GM12878 (cell line): ENCODE measurements at regions of chr11 and their contacts with region 1.

Region 1: DNA sequence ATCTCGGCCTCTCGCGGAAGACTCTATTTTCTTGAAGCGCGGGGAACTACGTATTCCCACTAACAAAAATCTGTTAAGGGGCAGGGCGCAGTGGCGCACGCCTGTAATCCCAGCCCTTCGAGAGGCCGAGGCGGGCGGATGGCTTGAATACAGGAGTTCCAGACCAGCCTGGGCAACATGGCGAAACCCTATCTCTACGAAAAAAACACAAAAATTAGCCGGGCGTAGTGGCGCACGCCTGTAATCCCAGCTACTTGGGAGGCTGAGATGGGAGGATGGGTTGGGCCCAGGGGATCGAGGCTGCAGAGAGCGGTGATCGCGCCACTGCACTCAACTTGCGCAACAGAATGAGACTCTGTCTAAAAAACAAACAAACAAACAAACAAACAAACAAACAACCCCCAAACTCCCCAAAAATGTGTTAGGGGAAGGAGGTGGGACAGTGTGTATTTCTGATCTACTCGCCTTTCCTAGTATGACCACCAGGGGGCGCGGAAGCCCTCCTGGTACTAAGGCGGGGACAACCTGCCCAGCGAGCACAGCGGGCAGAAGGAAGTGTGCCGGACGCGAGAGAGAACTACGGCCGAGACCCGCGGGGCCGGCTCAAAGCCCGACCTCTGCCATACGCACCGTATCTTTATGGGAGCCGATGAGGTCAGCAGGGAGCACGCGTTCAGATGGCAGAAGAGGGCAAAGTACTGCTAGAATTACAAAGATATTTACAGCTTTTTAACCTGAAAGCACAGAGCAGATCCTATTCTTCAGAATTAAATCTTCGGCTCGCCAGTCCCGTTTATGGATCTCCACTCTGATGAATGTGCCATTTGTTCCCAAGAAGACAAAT is 1.3 kb upstream of the STX3 start:
- DNase-seq: peak; percentile 50
- ATAC-seq: peak; percentile 88
- H3K4me3 ChIP-seq: peak overlapping the region; percentile 97
- H3K27ac ChIP-seq: no peak overlapping the region
- H3K4me1 ChIP-seq: peaks cover 4% of the 10 kb centered on the region
- H3K27me3 ChIP-seq: peaks cover 0 to 3% of the 10 kb centered on the region in 2 experiments; a peak in 1 of 4 replicates
- CTCF ChIP-seq: peak; percentile 81 to 89 (median 85)
- EP300 ChIP-seq: no peak
- POLR2A ChIP-seq: no peak
- RAD21 ChIP-seq: peak; percentile 79

Region 2: GRCh38 chr11:59802639-59803176 is 48.8 kb after region 1 on chr11:
- CTCF ChIA-PET with region 1: interaction called, 88 read pairs
- POLR2A ChIA-PET with region 1: interaction called, 4 read pairs
- RAD21 ChIA-PET with region 1: interaction called, 31 read pairs
- SMC1A ChIA-PET with region 1: interaction called, 21 read pairs
- in situ Hi-C with region 1: loop called (anchors 5 kb)
- intact Hi-C with region 1: loop called (anchors 1 kb)
- DNase-seq: no peak
- ATAC-seq: peak; percentile 82
- H3K4me3 ChIP-seq: no peak overlapping the region
- H3K27ac ChIP-seq: no peak overlapping the region
- H3K4me1 ChIP-seq: no peaks in the 10 kb centered on the region
- H3K27me3 ChIP-seq: no peaks in the 10 kb centered on the region
- CTCF ChIP-seq: peak; percentile 47 to 73 (median 65); a peak in 5 of 6 replicates
- EP300 ChIP-seq: no peak
- POLR2A ChIP-seq: no peak
- RAD21 ChIP-seq: peak; percentile 86

Region 3: GRCh38 chr11:59810189-59810910 is 56.5 kb after region 1 on chr11 and contains the start of gene MRPL16:
- CTCF ChIA-PET with region 1: interaction called, 17 read pairs
- POLR2A ChIA-PET with region 1: no interaction called
- RAD21 ChIA-PET with region 1: interaction called, 5 read pairs
- SMC1A ChIA-PET with region 1: interaction called, 18 read pairs
- in situ Hi-C with region 1: no loop called
- intact Hi-C with region 1: loop called (anchors 2 kb)
- DNase-seq: peak; percentile 69
- ATAC-seq: peak; percentile 99
- H3K4me3 ChIP-seq: peak within 1 kb of the TSS; percentile 87
- H3K27ac ChIP-seq: peak within 1 kb of the TSS; percentile 67
- H3K4me1 ChIP-seq: no peaks in the 10 kb centered on the region; the same call in 1 of the 2 replicates
- H3K27me3 ChIP-seq: no peaks in the 10 kb centered on the region
- CTCF ChIP-seq: peak; percentile 8 to 44 (median 41); a peak in 5 of 6 replicates
- EP300 ChIP-seq: no peak
- POLR2A ChIP-seq: peak; percentile 95
- RAD21 ChIP-seq: no peak
- polyA plus RNA-seq, gene MRPL16: 38.2 to 75.0 TPM

Region 4: DNA sequence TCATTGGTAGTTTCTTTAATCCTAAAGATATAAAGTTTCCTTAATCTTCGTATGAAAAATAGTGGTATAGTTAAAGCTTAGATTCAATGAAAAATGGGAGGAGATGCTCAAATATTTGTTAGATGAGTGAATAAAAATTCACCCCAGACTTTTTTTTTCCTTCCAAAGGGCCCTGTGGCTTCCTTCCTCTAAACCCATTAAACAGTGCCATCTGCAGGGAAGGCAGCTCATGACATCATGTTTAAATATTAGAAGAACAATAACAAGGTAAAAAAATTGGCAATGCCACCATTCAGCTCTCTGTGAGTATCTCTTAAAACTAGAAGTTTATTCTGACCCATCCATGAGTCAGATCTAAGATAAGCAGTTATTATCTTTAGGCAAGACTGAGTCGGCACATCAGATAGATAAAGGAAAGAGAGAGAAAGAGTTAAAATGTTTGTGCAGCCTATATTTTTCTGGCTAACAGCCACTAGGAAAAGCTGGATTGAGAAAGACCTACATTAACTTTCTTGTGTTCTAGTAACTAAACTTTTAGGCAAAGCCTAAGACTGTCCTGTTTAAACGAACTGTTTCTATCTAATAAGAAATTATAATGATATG is 165.2 kb after region 1 on chr11:
- CTCF ChIA-PET with region 1: interaction called, 13 read pairs
- POLR2A ChIA-PET with region 1: no interaction called
- RAD21 ChIA-PET with region 1: interaction called, 3 read pairs
- SMC1A ChIA-PET with region 1: interaction called, 4 read pairs
- in situ Hi-C with region 1: no loop called
- intact Hi-C with region 1: loop called (anchors 5 kb)
- DNase-seq: no peak
- ATAC-seq: peak; percentile 41; the same call in 1 of the 3 replicates
- H3K4me3 ChIP-seq: no peak overlapping the region
- H3K27ac ChIP-seq: no peak overlapping the region
- H3K4me1 ChIP-seq: no peaks in the 10 kb centered on the region
- H3K27me3 ChIP-seq: no peaks in the 10 kb centered on the region
- CTCF ChIP-seq: peak; percentile 33 to 45 (median 37); a peak in 4 of 6 replicates
- EP300 ChIP-seq: no peak
- POLR2A ChIP-seq: no peak
- RAD21 ChIP-seq: peak; percentile 59

Region 5: GRCh38 chr11:60130496-60130895 is 376.6 kb after region 1 on chr11:
- CTCF ChIA-PET with region 1: no interaction called
- POLR2A ChIA-PET with region 1: no interaction called
- RAD21 ChIA-PET with region 1: no interaction called
- SMC1A ChIA-PET with region 1: no interaction called
- in situ Hi-C with region 1: no loop called
- intact Hi-C with region 1: loop called (anchors 5 kb)
- DNase-seq: no peak
- ATAC-seq: peak; percentile 83
- H3K4me3 ChIP-seq: no peak overlapping the region
- H3K27ac ChIP-seq: no peak overlapping the region
- H3K4me1 ChIP-seq: no peaks in the 10 kb centered on the region
- H3K27me3 ChIP-seq: no peaks in the 10 kb centered on the region
- CTCF ChIP-seq: peak; percentile 33 to 37 (median 36); a peak in 3 of 6 replicates
- EP300 ChIP-seq: no peak
- POLR2A ChIP-seq: no peak
- RAD21 ChIP-seq: peak; percentile 60